ENCODE measurements at regions of chr17 and their contacts with region 1.

Region 1: DNA sequence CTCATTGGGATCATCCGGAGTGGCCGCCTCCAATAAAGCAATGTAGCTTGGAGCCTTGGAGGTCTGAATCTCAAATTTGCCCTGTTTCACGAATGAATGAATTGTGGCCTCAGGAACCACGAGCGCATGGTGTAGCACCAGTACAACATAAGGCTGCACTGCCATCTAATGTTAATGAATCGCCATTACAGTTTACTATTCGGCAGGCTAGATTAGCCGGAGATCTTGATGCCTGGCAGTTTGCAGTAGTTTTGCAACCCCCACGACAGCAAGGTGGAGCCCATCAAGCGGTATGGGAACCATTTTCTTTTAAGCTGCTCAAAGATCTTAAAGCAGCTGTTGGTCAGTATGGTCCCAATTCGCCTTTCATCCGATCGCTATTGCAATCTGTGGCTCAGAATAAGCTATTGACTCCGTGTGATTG is 18.8 kb downstream of the ALOX15B start:
- DNase-seq: peak; percentile 88 to 97
- ATAC-seq: peak; percentile 67 to 93
- H3K4me3 ChIP-seq: peak overlapping the region; percentile 16; the same call in 2 of the 3 replicates
- H3K27ac ChIP-seq: no peak overlapping the region; a peak in 1 of 6 replicates
- H3K4me1 ChIP-seq: peaks cover 6% of the 10 kb centered on the region; the same call in 2 of the 3 replicates
- CTCF ChIP-seq: peak; percentile 93
- EP300 ChIP-seq: no peak
- POLR2A ChIP-seq: no peak
- RAD21 ChIP-seq: peak; percentile 90 to 94

Region 2: GRCh38 chr17:7740481-7741001 is 317.2 kb before region 1 on chr17:
- CTCF ChIA-PET with region 1: interaction called, 19 read pairs
- POLR2A ChIA-PET with region 1: no interaction called
- DNase-seq: no peak
- ATAC-seq: no peak
- H3K4me3 ChIP-seq: no peak overlapping the region
- H3K27ac ChIP-seq: no peak overlapping the region
- H3K4me1 ChIP-seq: peaks cover 3% of the 10 kb centered on the region
- CTCF ChIP-seq: no peak
- EP300 ChIP-seq: no peak
- POLR2A ChIP-seq: no peak
- RAD21 ChIP-seq: no peak

Region 3: DNA sequence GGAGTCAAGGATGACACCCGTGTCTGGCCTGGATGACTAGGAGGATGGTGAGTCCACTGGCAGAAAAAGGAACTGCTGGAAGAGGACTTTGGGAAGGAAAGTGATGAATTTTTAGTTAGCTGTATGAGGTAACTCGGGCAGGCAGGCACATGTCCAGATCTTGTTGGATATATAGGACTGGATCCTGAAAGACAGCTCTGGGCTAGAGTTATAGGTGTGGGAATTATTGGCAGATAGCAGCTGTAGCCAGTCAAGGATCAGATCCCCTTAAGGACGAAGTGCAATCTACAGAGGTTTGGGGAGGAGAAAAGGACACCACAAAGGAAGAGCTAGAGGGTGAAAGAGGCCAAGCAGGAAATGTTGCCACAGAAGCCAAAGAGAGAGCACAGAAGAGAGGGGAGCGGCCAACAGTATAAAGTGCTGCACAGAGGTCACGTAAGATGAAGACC is 189.8 kb before region 1 on chr17:
- CTCF ChIA-PET with region 1: interaction called, 118 read pairs
- POLR2A ChIA-PET with region 1: no interaction called
- DNase-seq: no peak
- ATAC-seq: no peak
- H3K4me3 ChIP-seq: no peak overlapping the region
- H3K27ac ChIP-seq: no peak overlapping the region
- H3K4me1 ChIP-seq: peaks cover 5% of the 10 kb centered on the region; the same call in 1 of the 3 replicates
- CTCF ChIP-seq: no peak
- EP300 ChIP-seq: no peak
- POLR2A ChIP-seq: no peak
- RAD21 ChIP-seq: no peak

Region 4: DNA sequence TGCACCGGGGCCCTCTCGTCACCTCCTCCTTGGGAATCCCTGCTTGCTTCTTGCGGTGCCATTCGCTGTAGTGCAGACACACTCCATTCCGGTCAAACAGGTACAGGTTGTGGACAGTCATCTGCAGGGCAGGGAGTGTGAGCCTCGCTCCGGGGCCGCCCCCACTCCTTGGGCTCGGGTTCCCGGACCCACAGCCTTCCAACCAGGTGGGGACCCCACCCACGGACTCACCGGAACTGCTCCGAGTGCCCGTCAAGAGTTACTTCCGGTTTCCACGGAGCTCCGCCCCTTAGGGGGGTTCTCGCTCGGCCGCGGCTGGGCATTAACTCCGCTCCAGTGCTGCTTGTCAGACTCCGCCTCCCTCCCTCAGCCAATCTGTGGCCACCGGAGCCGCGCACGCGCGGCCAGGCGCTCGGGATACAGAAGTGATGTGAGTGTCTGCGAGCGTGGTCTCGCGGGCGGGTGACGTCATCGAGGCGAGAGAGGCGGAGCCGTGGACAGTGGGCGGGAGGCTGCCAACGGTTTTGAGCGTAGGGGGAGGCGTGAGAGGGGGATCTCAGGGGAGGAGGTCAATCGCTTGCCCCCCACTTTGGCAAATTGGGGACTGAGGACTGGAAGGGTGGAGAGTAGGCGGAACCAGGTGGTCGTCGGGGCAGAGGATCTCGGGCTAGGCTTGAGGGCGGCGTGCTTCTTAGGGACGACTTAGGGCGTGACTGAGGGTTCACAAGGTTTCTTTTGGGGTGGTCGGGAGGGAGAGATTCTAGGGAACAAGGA is 125.8 kb before region 1 on chr17 and contains the starts of genes CNTROB and TRAPPC1:
- CTCF ChIA-PET with region 1: interaction called, 24 read pairs
- POLR2A ChIA-PET with region 1: no interaction called
- DNase-seq: peak; percentile 99 to 100
- ATAC-seq: peak; percentile 86 to 94
- H3K4me3 ChIP-seq: peak within 1 kb of the TSS; percentile 69
- H3K27ac ChIP-seq: peak within 1 kb of the TSS; percentile 86 to 89
- H3K4me1 ChIP-seq: peaks cover 21% of the 10 kb centered on the region
- CTCF ChIP-seq: no peak
- EP300 ChIP-seq: no peak
- POLR2A ChIP-seq: peak; percentile 72
- RAD21 ChIP-seq: no peak
- polyA plus RNA-seq, gene CNTROB: 23.2 and 28.3 TPM in 2 replicates
- polyA plus RNA-seq, gene TRAPPC1: 200 and 204 TPM in 2 replicates

Region 5: DNA sequence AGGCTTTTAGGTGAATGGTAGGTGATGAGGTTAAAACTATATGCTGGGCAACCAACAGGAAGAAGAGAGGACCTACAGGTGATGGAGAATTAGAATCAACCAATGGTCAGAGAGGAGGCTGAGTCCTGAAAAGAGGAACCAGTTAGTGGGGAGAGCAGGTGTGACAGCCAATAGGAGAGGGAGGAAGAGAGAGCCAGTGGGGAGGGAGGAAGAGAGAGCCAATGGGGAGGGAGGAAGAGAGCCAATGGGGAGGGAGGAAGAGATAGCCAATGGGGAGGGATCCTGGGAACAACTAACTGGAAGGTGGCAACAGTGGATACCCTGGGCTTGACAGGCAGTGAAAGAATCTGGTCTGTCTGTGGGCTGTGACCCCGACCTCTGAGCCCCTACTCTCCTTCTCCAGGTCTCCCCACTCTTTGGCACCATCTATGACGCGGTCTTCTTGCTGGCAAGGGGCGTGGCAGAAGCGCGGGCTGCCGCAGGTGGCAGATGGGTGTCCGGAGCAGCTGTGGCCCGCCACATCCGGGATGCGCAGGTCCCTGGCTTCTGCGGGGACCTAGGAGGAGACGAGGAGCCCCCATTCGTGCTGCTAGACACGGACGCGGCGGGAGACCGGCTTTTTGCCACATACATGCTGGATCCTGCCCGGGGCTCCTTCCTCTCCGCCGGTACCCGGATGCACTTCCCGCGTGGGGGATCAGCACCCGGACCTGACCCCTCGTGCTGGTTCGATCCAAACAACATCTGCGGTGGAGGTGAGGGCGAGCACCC is 51.6 kb before region 1 on chr17:
- CTCF ChIA-PET with region 1: interaction called, 14 read pairs
- POLR2A ChIA-PET with region 1: no interaction called
- DNase-seq: peak in 1 of 2 experiments; percentile 64
- ATAC-seq: peak in 1 of 2 experiments; percentile 74; a peak in 3 of 6 replicates
- H3K4me3 ChIP-seq: no peak overlapping the region
- H3K27ac ChIP-seq: no peak overlapping the region
- H3K4me1 ChIP-seq: no peaks in the 10 kb centered on the region
- CTCF ChIP-seq: no peak
- EP300 ChIP-seq: no peak
- POLR2A ChIP-seq: no peak
- RAD21 ChIP-seq: no peak

Region 6: DNA sequence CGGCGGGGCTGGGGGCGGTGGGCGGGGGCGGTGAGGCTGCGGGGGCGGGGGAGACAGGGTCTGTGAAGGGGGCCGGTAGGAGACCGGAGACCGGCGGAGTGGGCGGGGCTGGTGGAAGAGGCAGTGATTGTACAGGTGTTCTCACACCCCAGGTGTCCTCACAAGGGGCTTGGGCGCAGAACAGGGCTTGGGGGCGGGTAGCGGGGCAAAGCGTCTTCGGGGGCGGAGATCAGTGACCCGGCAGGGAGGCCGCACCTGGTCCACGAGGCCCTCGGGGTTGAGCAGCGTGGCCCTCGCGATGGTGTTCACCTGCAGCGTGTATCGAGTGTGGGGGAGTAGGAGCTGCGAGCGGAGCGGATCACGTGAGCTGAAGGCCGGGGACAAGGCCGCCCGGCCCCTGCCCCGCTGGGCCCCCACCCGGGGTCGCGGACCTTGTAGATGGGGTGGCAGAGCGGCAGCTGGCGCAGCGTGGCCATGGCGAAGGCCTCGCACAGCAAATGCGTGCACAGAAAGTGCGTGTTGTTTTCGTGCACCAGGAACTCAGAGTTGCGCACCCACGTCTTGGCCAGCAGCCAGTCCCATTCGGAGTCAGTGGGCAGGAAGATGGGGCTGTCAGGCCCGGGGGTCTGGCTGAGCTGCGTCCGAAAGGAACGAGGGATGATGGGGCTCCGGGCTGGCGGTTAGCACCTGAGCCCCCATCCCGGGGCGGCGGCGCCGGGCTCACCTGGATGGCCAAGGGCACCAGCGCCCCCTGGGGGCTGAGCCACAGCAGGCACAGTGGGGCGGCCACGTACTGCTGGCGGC is 52.2 kb after region 1 on chr17:
- CTCF ChIA-PET with region 1: interaction called, 258 read pairs
- POLR2A ChIA-PET with region 1: no interaction called
- DNase-seq: peak; percentile 66 to 75
- ATAC-seq: peak; percentile 79 to 93
- H3K4me3 ChIP-seq: no peak overlapping the region
- H3K27ac ChIP-seq: no peak overlapping the region
- H3K4me1 ChIP-seq: peaks cover 15% of the 10 kb centered on the region
- CTCF ChIP-seq: peak; percentile 88
- EP300 ChIP-seq: no peak
- POLR2A ChIP-seq: no peak
- RAD21 ChIP-seq: peak; percentile 70 to 77

Region 7: GRCh38 chr17:8212312-8213180 is 154.8 kb after region 1 on chr17:
- CTCF ChIA-PET with region 1: no interaction called
- POLR2A ChIA-PET with region 1: no interaction called
- DNase-seq: no peak
- ATAC-seq: no peak
- H3K4me3 ChIP-seq: no peak overlapping the region
- H3K27ac ChIP-seq: no peak overlapping the region
- H3K4me1 ChIP-seq: peaks cover 19% of the 10 kb centered on the region
- CTCF ChIP-seq: no peak
- EP300 ChIP-seq: no peak
- POLR2A ChIP-seq: no peak
- RAD21 ChIP-seq: no peak

Region 8: DNA sequence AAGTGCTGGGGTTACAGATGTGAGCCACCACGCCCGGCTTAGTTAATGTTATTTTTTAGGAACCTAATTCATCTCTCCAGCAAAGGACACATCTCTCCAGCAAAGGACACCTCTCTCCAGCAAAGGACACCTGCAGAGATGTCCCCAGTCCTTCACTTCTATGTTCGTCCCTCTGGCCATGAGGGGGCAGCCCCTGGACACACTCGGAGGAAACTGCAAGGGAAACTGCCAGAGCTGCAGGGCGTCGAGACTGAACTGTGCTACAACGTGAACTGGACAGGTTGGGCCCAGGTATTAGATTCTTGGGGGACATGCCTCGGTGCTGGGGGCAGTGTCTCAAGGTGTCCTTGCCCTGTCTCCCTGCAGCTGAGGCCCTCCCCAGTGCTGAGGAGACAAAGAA is 196.1 kb after region 1 on chr17:
- CTCF ChIA-PET with region 1: no interaction called
- POLR2A ChIA-PET with region 1: no interaction called
- DNase-seq: peak in 1 of 2 experiments; percentile 62
- ATAC-seq: peak; percentile 44 to 57; a peak in 4 of 6 replicates
- H3K4me3 ChIP-seq: no peak overlapping the region
- H3K27ac ChIP-seq: no peak overlapping the region
- H3K4me1 ChIP-seq: peaks cover 8% of the 10 kb centered on the region
- CTCF ChIP-seq: peak; percentile 48
- EP300 ChIP-seq: no peak
- POLR2A ChIP-seq: no peak
- RAD21 ChIP-seq: peak; percentile 37 to 60; a peak in 3 of 5 replicates

Region 9: GRCh38 chr17:8894673-8895578 is 837.2 kb after region 1 on chr17:
- CTCF ChIA-PET with region 1: interaction called, 15 read pairs
- POLR2A ChIA-PET with region 1: no interaction called
- DNase-seq: peak; percentile 78 to 93
- ATAC-seq: peak; percentile 84 to 93
- H3K4me3 ChIP-seq: no peak overlapping the region
- H3K27ac ChIP-seq: no peak overlapping the region
- H3K4me1 ChIP-seq: no peaks in the 10 kb centered on the region
- CTCF ChIP-seq: peak; percentile 73
- EP300 ChIP-seq: no peak
- POLR2A ChIP-seq: no peak
- RAD21 ChIP-seq: peak; percentile 73 to 84

Measured in A549 (cell line).